Activated CD4-positive, alpha-beta T cell treated with anti-CD3 and anti-CD28 coated beads, Interleukin-2, amount 10 ng/mL, durations not matched to agents 24 days and 14 days (primary cell): ENCODE measurements at regions of chr7 and their contacts with region 1.

Region 1: GRCh38 chr7:22885797-22886261 is 63.2 kb upstream of the TOMM7 start:
- DNase-seq: peak; percentile 90
- H3K4me3 Mint-ChIP-seq: peak overlapping the region; percentile 66
- H3K27ac Mint-ChIP-seq: peak overlapping the region; percentile 93
- H3K4me1 Mint-ChIP-seq: peaks cover 43% of the 10 kb centered on the region
- H3K27me3 Mint-ChIP-seq: no peaks in the 10 kb centered on the region

Region 2: DNA sequence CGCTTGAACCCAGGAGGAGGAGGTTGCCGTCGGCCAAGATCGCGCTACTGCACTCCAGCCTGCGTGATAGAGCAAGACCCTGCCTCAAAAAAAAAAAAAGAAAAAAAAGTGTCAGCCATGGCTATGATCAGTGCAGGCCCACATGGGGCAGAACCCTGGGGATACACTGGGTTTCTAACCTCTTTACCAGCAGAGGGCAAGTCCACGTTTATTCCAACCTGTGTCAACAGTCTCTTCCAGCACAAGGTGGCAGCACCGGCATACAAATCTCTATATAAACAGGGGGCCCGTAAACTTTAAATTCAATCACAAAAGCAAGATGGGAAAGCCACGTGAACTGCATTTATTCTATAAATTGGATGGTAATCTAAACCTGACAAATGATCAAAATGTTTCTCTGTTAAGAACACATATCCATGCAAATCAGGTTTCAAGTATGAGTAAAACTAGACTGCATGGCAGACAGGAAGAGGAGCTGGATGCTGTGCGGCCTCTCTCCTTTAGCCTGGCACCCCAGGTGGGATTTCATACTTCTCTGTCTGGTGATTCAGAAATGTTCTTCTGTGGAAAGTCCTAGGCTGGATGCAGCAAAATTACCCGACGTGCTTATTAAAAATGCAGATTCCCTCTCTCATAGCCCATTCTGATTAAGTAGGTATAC is 325.9 kb before region 1 on chr7:
- intact Hi-C with region 1: loop called (anchors 10 kb)
- DNase-seq: peak; percentile 91
- H3K4me3 Mint-ChIP-seq: no peak overlapping the region
- H3K27ac Mint-ChIP-seq: no peak overlapping the region
- H3K4me1 Mint-ChIP-seq: peaks cover 37% of the 10 kb centered on the region
- H3K27me3 Mint-ChIP-seq: peaks cover 10% of the 10 kb centered on the region

Region 3: GRCh38 chr7:22660732-22661131 is 225.1 kb before region 1 on chr7:
- intact Hi-C with region 1: loop called (anchors 10 kb)
- DNase-seq: no peak
- H3K4me3 Mint-ChIP-seq: no peak overlapping the region
- H3K27ac Mint-ChIP-seq: no peak overlapping the region
- H3K4me1 Mint-ChIP-seq: peaks cover 22% of the 10 kb centered on the region
- H3K27me3 Mint-ChIP-seq: peaks cover 39% of the 10 kb centered on the region

Region 4: DNA sequence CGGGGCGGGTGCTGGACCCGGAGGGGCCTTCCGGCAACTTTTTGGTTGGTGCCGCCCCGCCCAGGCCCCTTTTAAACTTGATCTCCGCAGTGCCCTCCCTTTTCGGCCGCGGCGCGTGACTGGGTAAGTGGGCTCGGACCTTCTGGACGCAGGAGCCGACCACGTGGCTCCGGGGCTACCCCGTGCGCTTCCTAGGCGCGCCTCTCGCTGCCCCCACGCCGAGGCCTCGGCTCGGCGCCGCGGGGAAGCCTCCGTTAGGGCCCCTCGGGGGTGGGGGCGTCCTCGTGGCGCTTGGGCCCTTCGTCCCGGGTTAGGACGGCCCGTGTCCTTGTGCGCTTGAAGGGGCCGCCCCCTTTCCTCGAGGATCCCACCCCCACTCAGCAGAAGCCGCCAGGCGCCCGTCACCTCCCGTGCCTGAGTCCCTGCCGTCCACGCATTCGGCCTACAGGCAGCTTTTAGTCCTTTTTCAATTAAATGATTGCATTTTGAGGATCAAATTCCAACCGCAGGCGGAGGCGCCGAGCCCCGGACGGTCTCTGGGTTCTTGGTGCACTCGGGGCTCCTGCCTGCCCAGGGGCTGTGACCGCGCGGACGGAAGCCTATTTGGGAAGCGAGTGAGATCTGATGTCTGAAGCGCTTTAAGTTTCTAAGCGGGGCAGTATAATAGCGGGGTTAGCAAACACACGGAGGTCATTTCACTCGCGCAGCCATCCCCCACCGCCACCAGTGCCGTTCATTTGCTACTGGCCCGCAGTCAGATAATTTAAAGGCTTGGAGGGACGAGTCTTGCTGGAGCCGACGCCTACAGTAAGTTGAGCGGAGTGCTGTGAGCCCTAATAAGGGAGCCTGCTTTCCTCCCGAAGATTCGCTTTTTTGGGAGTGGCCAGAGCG is 31.4 kb before region 1 on chr7:
- intact Hi-C with region 1: loop called (anchors 1 kb)
- DNase-seq: peak; percentile 94
- H3K4me3 Mint-ChIP-seq: peak overlapping the region; percentile 98
- H3K27ac Mint-ChIP-seq: peak overlapping the region; percentile 93
- H3K4me1 Mint-ChIP-seq: peaks cover 28% of the 10 kb centered on the region
- H3K27me3 Mint-ChIP-seq: peaks cover 1% of the 10 kb centered on the region

Region 5: DNA sequence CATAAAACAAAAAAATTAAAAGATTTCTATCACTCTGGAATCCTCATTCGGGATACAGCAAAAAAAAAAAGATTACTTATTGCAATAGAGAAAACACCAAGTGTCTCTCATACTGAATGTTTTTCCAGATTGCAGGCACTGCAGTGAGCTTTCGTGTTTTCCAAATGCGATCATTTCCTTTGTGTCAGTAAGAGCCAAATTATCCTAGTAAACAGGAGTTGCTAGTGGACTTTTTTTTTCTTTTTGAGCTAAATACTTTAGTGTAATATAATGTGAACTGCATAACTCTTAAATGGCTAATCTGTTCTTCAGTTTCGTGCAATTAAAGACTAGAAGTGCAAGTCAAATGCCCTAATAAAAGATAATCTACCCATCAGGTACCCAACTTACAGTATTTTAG is 18.8 kb before region 1 on chr7:
- intact Hi-C with region 1: no loop called
- DNase-seq: no peak
- H3K4me3 Mint-ChIP-seq: no peak overlapping the region
- H3K27ac Mint-ChIP-seq: no peak overlapping the region
- H3K4me1 Mint-ChIP-seq: peaks cover 3% of the 10 kb centered on the region
- H3K27me3 Mint-ChIP-seq: no peaks in the 10 kb centered on the region

Region 6: DNA sequence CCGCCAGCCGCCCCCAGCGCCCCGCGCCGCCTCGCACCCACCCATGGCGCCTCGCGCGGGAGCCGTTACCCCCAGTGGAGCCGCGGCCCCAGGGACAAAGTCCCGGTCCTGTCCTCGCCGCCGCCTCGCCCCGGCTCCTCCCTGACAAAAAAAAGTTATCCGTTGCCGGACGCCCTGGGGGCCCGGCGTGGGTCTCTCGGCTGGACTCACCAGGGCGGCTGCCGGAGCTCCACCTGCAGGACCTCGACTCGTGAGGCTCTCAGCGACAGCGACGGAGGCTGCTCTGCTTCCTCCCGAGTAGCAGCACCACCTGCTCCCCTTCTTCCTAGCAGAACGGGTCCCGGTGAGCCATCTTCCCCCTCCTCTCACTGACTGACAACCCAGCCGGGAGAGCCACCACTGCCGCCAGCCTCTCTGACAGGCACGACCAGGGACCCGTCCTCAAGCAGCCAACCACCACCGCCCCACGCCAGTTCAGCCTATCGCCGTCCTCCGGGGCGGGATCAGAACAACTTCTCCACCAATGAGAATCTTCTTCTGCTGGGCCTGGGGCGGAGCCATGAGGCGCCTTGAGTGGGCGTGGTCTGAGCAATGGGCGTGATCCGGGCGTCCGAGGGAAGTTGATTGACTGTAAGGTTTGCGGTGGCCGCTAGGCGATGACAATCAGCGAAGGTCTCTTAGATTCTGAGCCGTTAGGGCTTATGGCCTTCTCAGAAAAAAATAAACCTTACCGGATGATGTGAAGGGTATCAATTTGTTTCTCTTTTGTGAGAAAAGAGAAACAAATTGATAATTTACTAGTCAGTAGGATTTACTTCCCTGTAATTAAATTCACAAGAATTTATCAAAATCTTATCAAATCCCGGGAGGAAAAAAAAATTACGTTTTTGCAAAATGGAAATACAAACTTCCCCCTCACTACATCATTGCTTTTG is 128.2 kb after region 1 on chr7 and contains the start of gene HYCC1:
- intact Hi-C with region 1: loop called (anchors 1 kb)
- DNase-seq: peak; percentile 100
- H3K4me3 Mint-ChIP-seq: peak within 1 kb of the TSS; percentile 92
- H3K27ac Mint-ChIP-seq: peak within 1 kb of the TSS; percentile 88
- H3K4me1 Mint-ChIP-seq: peaks cover 29% of the 10 kb centered on the region
- H3K27me3 Mint-ChIP-seq: no peaks in the 10 kb centered on the region
- total RNA-seq, gene HYCC1: 33.7 and 41.5 TPM in 2 replicates